Naive thymus-derived CD4-positive, alpha-beta T cell (primary cell): ENCODE measurements at regions of chrX and their contacts with region 1.

Region 1: DNA sequence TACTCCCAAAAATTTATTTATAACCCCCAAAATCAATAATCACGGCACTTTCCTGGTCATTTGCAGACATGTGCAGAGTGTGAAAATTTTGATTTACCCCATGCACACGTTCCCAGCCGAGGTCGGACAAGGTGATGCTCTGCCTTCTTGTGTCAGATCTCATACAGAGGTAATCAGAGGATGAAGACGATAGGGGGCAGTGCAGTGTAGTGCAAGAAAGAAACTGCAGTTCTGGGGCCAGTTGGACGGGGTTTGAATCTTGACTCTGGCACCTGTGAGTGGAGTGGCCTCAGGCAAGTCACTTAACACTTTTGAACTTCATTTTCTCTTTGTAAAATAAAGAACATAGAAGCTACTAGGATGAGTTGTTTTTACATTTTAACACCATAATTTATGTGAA is 88.4 kb downstream of the FRMPD3 start:
- DNase-seq: peak in 7 of 9 donors; percentile 17 to 43 (median 29)
- ATAC-seq: peak; percentile 57
- H3K4me3 ChIP-seq: no peak overlapping the region
- H3K4me3 Mint-ChIP-seq: no peak overlapping the region
- H3K27ac ChIP-seq: no peak overlapping the region
- H3K27ac Mint-ChIP-seq: no peak overlapping the region
- H3K4me1 ChIP-seq: no peaks in the 10 kb centered on the region
- H3K4me1 Mint-ChIP-seq: peaks cover 0 to 4% (median 0%) of the 10 kb centered on the region in 7 donors
- H3K27me3 ChIP-seq: no peaks in the 10 kb centered on the region
- H3K27me3 Mint-ChIP-seq: peaks cover 0 to 12% (median 6%) of the 10 kb centered on the region in 5 donors

Region 2: GRCh38 chrX:107398115-107398514 is 139.7 kb before region 1 on chrX:
- CTCF ChIA-PET with region 1: no interaction called
- POLR2A ChIA-PET with region 1: no interaction called
- intact Hi-C with region 1: no loop called
- DNase-seq: no peak
- ATAC-seq: no peak
- H3K4me3 ChIP-seq: no peak overlapping the region
- H3K4me3 Mint-ChIP-seq: peak overlapping the region in 1 of 10 donors; percentile 31
- H3K27ac ChIP-seq: no peak overlapping the region
- H3K27ac Mint-ChIP-seq: no peak overlapping the region
- H3K4me1 ChIP-seq: no peaks in the 10 kb centered on the region
- H3K4me1 Mint-ChIP-seq: no peaks in the 10 kb centered on the region
- H3K27me3 ChIP-seq: no peaks in the 10 kb centered on the region
- H3K27me3 Mint-ChIP-seq: peaks cover 2 to 19% (median 10%) of the 10 kb centered on the region in 5 donors

Region 3: GRCh38 chrX:107654872-107655761 is 117.3 kb after region 1 on chrX:
- CTCF ChIA-PET with region 1: no interaction called
- POLR2A ChIA-PET with region 1: no interaction called
- intact Hi-C with region 1: loop called (anchors 5 to 10 kb)
- DNase-seq: peak; percentile 49 to 76 (median 60)
- ATAC-seq: peak; percentile 94
- H3K4me3 ChIP-seq: no peak overlapping the region
- H3K4me3 Mint-ChIP-seq: no peak overlapping the region
- H3K27ac ChIP-seq: no peak overlapping the region
- H3K27ac Mint-ChIP-seq: peak overlapping the region in 7 of 9 donors; percentile 1 to 89 (median 72)
- H3K4me1 ChIP-seq: peaks cover 0 to 6% of the 10 kb centered on the region in 2 donors
- H3K4me1 Mint-ChIP-seq: peaks cover 6 to 30% (median 18%) of the 10 kb centered on the region in 7 donors
- H3K27me3 ChIP-seq: no peaks in the 10 kb centered on the region
- H3K27me3 Mint-ChIP-seq: no peaks in the 10 kb centered on the region

Region 4: DNA sequence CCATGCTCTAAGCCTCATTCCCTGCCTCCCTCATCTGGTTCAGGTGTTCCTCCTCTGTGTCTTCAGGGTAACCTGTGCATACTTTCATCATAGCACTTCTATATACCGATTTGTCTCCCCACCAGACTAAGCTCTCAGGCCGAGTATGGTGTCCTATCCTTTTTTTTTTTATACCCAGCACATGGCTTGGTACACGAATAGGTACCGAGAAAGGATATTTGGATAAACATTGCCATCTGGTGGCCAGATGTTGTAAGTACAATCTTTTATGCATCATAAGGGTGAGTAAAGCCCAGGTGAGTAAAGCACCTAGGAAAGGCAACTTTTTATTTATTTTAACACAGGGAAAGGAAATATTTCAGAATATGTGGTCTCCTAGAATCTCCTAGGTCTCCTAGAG is 356.2 kb after region 1 on chrX:
- CTCF ChIA-PET with region 1: no interaction called
- POLR2A ChIA-PET with region 1: no interaction called
- intact Hi-C with region 1: loop called in 1 of 2 experiments (anchors 1 kb)
- DNase-seq: peak in 7 of 9 donors; percentile 30 to 68 (median 61)
- ATAC-seq: peak; percentile 72
- H3K4me3 ChIP-seq: no peak overlapping the region
- H3K4me3 Mint-ChIP-seq: no peak overlapping the region
- H3K27ac ChIP-seq: no peak overlapping the region
- H3K27ac Mint-ChIP-seq: peak overlapping the region in 3 of 9 donors; percentile 20 to 90 (median 52)
- H3K4me1 ChIP-seq: no peaks in the 10 kb centered on the region
- H3K4me1 Mint-ChIP-seq: peaks cover 0 to 8% (median 0%) of the 10 kb centered on the region in 7 donors
- H3K27me3 ChIP-seq: no peaks in the 10 kb centered on the region
- H3K27me3 Mint-ChIP-seq: no peaks in the 10 kb centered on the region

Region 5: DNA sequence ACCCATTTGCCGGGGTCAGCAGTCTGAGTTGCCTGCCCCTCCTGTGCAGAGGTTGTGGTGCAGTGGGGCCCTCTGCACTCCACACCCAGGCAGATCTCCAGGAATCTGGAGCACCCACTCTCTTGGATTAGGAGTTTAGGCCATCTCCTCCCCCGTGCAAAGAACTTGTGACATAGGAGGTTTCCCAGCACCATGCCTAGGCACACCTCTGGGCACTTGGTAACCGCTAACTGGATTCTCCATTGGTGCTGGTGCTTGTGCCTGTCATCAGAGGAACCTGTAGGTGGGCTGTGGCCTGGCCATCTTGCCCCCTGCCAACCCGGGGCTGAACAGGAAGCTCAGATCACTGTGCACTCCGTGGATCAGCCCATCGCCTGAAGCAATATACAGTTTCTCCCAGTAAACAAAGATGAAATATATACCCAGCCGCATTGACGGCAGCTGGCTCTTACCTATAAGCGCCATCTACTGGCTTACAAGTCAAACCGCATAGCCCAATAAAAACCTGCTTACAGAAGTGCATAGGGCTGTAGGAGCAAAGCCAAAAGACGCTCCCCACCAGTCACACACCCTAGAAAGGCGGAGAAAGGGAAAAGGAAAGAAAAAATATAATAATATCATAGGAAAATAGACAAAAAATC is 463.5 kb after region 1 on chrX:
- CTCF ChIA-PET with region 1: interaction called, 3 read pairs
- POLR2A ChIA-PET with region 1: no interaction called
- intact Hi-C with region 1: loop called in 1 of 2 experiments (anchors 5 kb)
- DNase-seq: peak in 7 of 9 donors; percentile 36 to 63 (median 49)
- ATAC-seq: peak; percentile 88
- H3K4me3 ChIP-seq: no peak overlapping the region
- H3K4me3 Mint-ChIP-seq: peak overlapping the region in 4 of 10 donors; percentile 8 to 38 (median 29)
- H3K27ac ChIP-seq: no peak overlapping the region
- H3K27ac Mint-ChIP-seq: peak overlapping the region in 4 of 9 donors; percentile 0 to 77 (median 44)
- H3K4me1 ChIP-seq: no peaks in the 10 kb centered on the region
- H3K4me1 Mint-ChIP-seq: peaks cover 0 to 8% (median 6%) of the 10 kb centered on the region in 7 donors
- H3K27me3 ChIP-seq: no peaks in the 10 kb centered on the region
- H3K27me3 Mint-ChIP-seq: peaks cover 0 to 16% (median 0%) of the 10 kb centered on the region in 5 donors